ENCODE measurements at regions of chr3 and their contacts with region 1.

Region 1: GRCh38 chr3:192816351-192816750 is 89.0 kb upstream of the FGF12 start:
- DNase-seq: no peak
- H3K4me3 ChIP-seq: no peak overlapping the region
- H3K27ac ChIP-seq: no peak overlapping the region
- H3K4me1 ChIP-seq: peaks cover 0 to 16% (median 8%) of the 10 kb centered on the region in 3 donors
- H3K27me3 ChIP-seq: no peaks in the 10 kb centered on the region
- CTCF ChIP-seq: peak in 5 of 6 experiments; percentile 55 to 82 (median 66)
- POLR2A ChIP-seq: no peak

Region 2: GRCh38 chr3:193040836-193041672 is 224.7 kb after region 1 on chr3:
- intact Hi-C with region 1: loop called (anchors 5 kb)
- DNase-seq: no peak
- H3K4me3 ChIP-seq: no peak overlapping the region
- H3K27ac ChIP-seq: no peak overlapping the region
- H3K4me1 ChIP-seq: no peaks in the 10 kb centered on the region
- H3K27me3 ChIP-seq: no peaks in the 10 kb centered on the region
- CTCF ChIP-seq: peak in 5 of 6 experiments; percentile 42 to 71 (median 48)
- POLR2A ChIP-seq: no peak

Region 3: GRCh38 chr3:193572426-193572908 is 756.1 kb after region 1 on chr3:
- intact Hi-C with region 1: loop called (anchors 10 kb)
- DNase-seq: no peak
- H3K4me3 ChIP-seq: no peak overlapping the region
- H3K27ac ChIP-seq: no peak overlapping the region
- H3K4me1 ChIP-seq: no peaks in the 10 kb centered on the region
- H3K27me3 ChIP-seq: no peaks in the 10 kb centered on the region
- CTCF ChIP-seq: peak in 5 of 6 experiments; percentile 65 to 83 (median 70)
- POLR2A ChIP-seq: no peak

Measured in esophagus squamous epithelium (tissue), 5 donors.